Activated B cell treated with CpG ODN at 0.5 μM for 24 hours (primary cell): ENCODE measurements at regions of chr10 and their contacts with region 1.

Region 1: GRCh38 chr10:28302638-28303488 is at the start of gene MPP7:
- DNase-seq: peak; percentile 96
- ATAC-seq: peak; percentile 91
- H3K4me3 Mint-ChIP-seq: peak within 1 kb of the TSS; percentile 91
- H3K27ac Mint-ChIP-seq: peak within 1 kb of the TSS; percentile 73
- H3K4me1 Mint-ChIP-seq: peaks cover 30% of the 10 kb centered on the region
- H3K27me3 Mint-ChIP-seq: peaks cover 35% of the 10 kb centered on the region
- CTCF ChIP-seq: no peak
- total RNA-seq, gene MPP7: 6.2 and 8.3 TPM in 2 replicates

Region 2: GRCh38 chr10:27155066-27155754 is 1147.7 kb before region 1 on chr10 and contains the start of gene MASTL:
- CTCF ChIA-PET with region 1: no interaction called
- POLR2A ChIA-PET with region 1: no interaction called
- intact Hi-C with region 1: loop called (anchors 5 kb)
- DNase-seq: peak; percentile 97
- ATAC-seq: peak; percentile 84
- H3K4me3 Mint-ChIP-seq: peak within 1 kb of the TSS; percentile 100
- H3K27ac Mint-ChIP-seq: peak within 1 kb of the TSS; percentile 100
- H3K4me1 Mint-ChIP-seq: peaks cover 44% of the 10 kb centered on the region
- H3K27me3 Mint-ChIP-seq: no peaks in the 10 kb centered on the region
- CTCF ChIP-seq: no peak
- total RNA-seq, gene MASTL: 11.2 and 12.4 TPM in 2 replicates

Region 3: GRCh38 chr10:27742195-27743011 is 560.5 kb before region 1 on chr10:
- CTCF ChIA-PET with region 1: interaction called, 4 read pairs
- POLR2A ChIA-PET with region 1: no interaction called
- intact Hi-C with region 1: loop called (anchors 5 kb)
- DNase-seq: peak; percentile 66
- ATAC-seq: peak; percentile 91
- H3K4me3 Mint-ChIP-seq: peak overlapping the region; percentile 76
- H3K27ac Mint-ChIP-seq: no peak overlapping the region
- H3K4me1 Mint-ChIP-seq: peaks cover 24% of the 10 kb centered on the region
- H3K27me3 Mint-ChIP-seq: peaks cover 60% of the 10 kb centered on the region
- CTCF ChIP-seq: no peak

Region 4: DNA sequence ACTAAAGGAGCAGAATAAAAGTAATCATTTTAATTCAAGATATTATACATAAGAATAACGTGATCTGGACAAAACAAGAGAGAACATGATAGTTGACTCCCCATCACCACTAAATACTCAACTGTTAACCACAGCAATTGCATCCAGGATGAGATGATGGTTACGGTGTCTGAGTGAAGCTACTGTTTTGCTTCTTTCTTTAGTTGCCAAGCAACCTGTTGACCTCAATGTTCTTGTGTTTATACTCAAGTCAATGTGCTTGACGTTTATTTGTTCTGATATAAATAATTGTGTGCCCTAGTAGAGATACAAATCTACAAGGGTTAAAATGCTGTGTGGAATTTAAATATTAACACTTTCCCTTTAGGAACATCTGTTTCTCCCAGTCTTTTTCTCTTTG is 31.4 kb after region 1 on chr10:
- CTCF ChIA-PET with region 1: interaction called, 13 read pairs
- POLR2A ChIA-PET with region 1: interaction called, 38 read pairs
- intact Hi-C with region 1: loop called (anchors 1 kb)
- DNase-seq: no peak
- ATAC-seq: peak; percentile 56
- H3K4me3 Mint-ChIP-seq: peak overlapping the region; percentile 79
- H3K27ac Mint-ChIP-seq: peak overlapping the region; percentile 97
- H3K4me1 Mint-ChIP-seq: peaks cover 46% of the 10 kb centered on the region
- H3K27me3 Mint-ChIP-seq: no peaks in the 10 kb centered on the region
- CTCF ChIP-seq: no peak

Region 5: GRCh38 chr10:28393966-28394568 is 91.2 kb after region 1 on chr10:
- CTCF ChIA-PET with region 1: interaction called, 12 read pairs
- POLR2A ChIA-PET with region 1: no interaction called
- intact Hi-C with region 1: no loop called
- DNase-seq: peak; percentile 30
- ATAC-seq: peak; percentile 56
- H3K4me3 Mint-ChIP-seq: no peak overlapping the region
- H3K27ac Mint-ChIP-seq: no peak overlapping the region
- H3K4me1 Mint-ChIP-seq: peaks cover 4% of the 10 kb centered on the region
- H3K27me3 Mint-ChIP-seq: peaks cover 4% of the 10 kb centered on the region
- CTCF ChIP-seq: peak; percentile 85

Region 6: GRCh38 chr10:28604567-28605536 is 302.0 kb after region 1 on chr10:
- CTCF ChIA-PET with region 1: no interaction called
- POLR2A ChIA-PET with region 1: no interaction called
- intact Hi-C with region 1: loop called (anchors 5 kb)
- DNase-seq: no peak
- ATAC-seq: no peak
- H3K4me3 Mint-ChIP-seq: no peak overlapping the region
- H3K27ac Mint-ChIP-seq: no peak overlapping the region
- H3K4me1 Mint-ChIP-seq: peaks cover 22% of the 10 kb centered on the region
- H3K27me3 Mint-ChIP-seq: no peaks in the 10 kb centered on the region
- CTCF ChIP-seq: no peak

Region 7: GRCh38 chr10:28946479-28946878 is 643.6 kb after region 1 on chr10:
- CTCF ChIA-PET with region 1: no interaction called
- POLR2A ChIA-PET with region 1: no interaction called
- intact Hi-C with region 1: no loop called
- DNase-seq: no peak
- ATAC-seq: no peak
- H3K4me3 Mint-ChIP-seq: no peak overlapping the region
- H3K27ac Mint-ChIP-seq: no peak overlapping the region
- H3K4me1 Mint-ChIP-seq: no peaks in the 10 kb centered on the region
- H3K27me3 Mint-ChIP-seq: peaks cover 9% of the 10 kb centered on the region
- CTCF ChIP-seq: no peak